ENCODE measurements at regions of chr13 and their contacts with region 1.

Region 1: GRCh38 chr13:46492946-46493345 is 60.0 kb upstream of the LRCH1 start:
- DNase-seq: no peak
- ATAC-seq: peak; percentile 15

Region 2: GRCh38 chr13:46544208-46544607 is 51.3 kb after region 1 on chr13:
- intact Hi-C with region 1: loop called (anchors 10 kb)
- DNase-seq: no peak
- ATAC-seq: no peak

Region 3: GRCh38 chr13:46687810-46688209 is 194.9 kb after region 1 on chr13:
- intact Hi-C with region 1: no loop called
- DNase-seq: no peak
- ATAC-seq: peak; percentile 69

Region 4: GRCh38 chr13:46721054-46721453 is 228.1 kb after region 1 on chr13:
- intact Hi-C with region 1: loop called (anchors 1 kb)
- DNase-seq: peak; percentile 36
- ATAC-seq: peak; percentile 58

Measured in left ventricle myocardium superior (tissue), 1 donor.